ENCODE measurements at regions of chr6 and their contacts with region 1.

Region 1: GRCh38 chr6:36985808-36986703 is at the start of gene MTCH1:
- DNase-seq: peak; percentile 96
- ATAC-seq: peak; percentile 87
- H3K4me3 Mint-ChIP-seq: peak within 1 kb of the TSS; percentile 96
- H3K27ac Mint-ChIP-seq: peak within 1 kb of the TSS; percentile 91
- H3K4me1 Mint-ChIP-seq: peaks cover 20% of the 10 kb centered on the region
- H3K27me3 Mint-ChIP-seq: no peaks in the 10 kb centered on the region
- CTCF ChIP-seq: no peak
- total RNA-seq, gene MTCH1: 128 and 133 TPM in 2 replicates

Region 2: DNA sequence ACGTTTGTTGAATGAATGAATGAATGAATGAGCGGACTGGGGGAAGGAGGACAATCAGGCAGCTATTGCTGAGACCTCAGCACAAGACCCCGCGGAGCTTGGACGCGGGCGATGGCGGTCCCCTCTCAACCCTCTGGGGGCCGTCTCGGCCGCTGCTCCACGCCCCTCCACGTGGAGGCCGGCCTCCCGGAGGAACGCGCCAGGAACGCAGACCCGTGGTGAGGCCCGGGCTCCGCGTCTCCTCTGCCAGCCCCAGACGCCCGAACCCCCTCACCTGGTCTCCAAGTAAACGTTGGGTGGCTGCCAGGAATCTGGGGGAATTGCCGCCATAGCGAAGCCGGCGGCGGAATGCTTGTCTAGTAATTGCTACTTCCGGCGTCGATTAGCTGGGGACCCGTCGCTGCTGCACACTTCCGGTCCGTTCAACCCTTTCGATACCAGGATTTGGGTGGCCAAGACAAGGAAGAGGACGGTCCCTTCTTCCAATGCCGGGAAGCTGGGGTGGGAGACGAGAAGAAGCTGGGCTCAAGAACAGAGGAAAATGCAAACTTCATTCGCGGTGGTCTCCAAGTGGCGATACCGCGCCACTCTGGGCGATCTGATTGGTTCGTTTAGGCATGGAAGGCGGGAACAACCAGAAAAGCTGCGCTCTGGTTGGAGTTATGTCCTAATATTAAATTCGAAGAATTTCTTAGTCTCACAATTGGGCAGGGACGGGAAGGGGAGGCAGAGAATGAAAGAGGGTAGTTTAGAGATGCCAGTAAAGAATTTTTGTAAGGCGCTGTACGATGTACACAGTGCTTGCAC is 111.4 kb before region 1 on chr6 and contains the start of gene PPIL1:
- CTCF ChIA-PET with region 1: no interaction called
- POLR2A ChIA-PET with region 1: interaction called, 12 read pairs
- intact Hi-C with region 1: no loop called
- DNase-seq: peak; percentile 83
- ATAC-seq: peak; percentile 94
- H3K4me3 Mint-ChIP-seq: peak within 1 kb of the TSS; percentile 98
- H3K27ac Mint-ChIP-seq: peak within 1 kb of the TSS; percentile 99
- H3K4me1 Mint-ChIP-seq: peaks cover 27% of the 10 kb centered on the region
- H3K27me3 Mint-ChIP-seq: no peaks in the 10 kb centered on the region
- CTCF ChIP-seq: no peak
- total RNA-seq, gene PPIL1: 23.4 and 27.0 TPM in 2 replicates

Region 3: GRCh38 chr6:36962874-36963273 is 23.2 kb before region 1 on chr6:
- CTCF ChIA-PET with region 1: interaction called, 4 read pairs
- POLR2A ChIA-PET with region 1: interaction called, 11 read pairs
- intact Hi-C with region 1: loop called (anchors 1 kb)
- DNase-seq: peak; percentile 74
- ATAC-seq: peak; percentile 80
- H3K4me3 Mint-ChIP-seq: peak overlapping the region; percentile 67
- H3K27ac Mint-ChIP-seq: peak overlapping the region; percentile 88
- H3K4me1 Mint-ChIP-seq: peaks cover 30% of the 10 kb centered on the region
- H3K27me3 Mint-ChIP-seq: no peaks in the 10 kb centered on the region
- CTCF ChIP-seq: no peak

Region 4: DNA sequence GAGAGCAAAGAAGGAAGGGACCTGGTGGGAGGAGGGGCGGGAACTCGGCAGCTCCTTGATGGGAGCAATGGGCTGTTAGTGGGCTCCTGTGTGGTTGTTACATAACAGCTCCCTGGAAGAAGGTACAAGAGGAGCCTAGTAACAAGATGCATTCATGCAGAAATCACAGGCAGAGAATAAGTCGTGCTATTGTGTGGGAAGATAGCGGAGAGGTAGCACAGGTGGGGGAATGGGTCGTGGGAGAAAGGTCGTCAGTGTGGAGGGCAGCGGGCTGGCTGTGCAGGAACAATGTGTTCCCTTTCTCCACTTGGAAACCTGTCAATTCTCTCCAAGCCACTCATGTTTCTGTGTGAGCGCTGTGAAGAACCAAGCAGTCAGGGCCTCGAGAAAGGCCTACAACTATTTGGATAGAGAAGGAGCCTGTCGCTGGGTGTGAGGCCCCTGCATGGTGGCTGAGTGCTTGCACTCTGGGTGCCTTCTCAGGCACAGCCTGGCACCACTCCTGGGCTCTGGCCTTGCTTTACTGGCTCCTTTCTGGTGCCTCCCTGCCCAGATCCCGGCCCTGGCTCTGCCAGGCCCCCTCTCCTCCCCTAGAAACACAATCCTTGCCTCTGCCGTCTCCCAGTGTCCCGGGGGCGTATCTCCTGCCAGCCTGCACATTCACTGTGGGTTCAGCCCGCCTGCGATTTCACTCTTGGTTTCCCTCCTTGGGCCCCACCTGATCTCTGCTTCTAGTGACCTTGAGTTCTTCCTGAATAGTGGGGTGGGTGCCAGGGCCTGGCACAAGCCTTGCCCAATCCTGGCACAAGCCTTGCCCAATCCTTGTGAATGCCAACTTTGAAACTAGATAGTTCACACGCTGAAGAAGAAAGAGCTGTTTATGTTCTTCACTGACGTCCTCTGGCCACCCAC is 12.0 kb after region 1 on chr6:
- CTCF ChIA-PET with region 1: no interaction called
- POLR2A ChIA-PET with region 1: interaction called, 209 read pairs
- intact Hi-C with region 1: no loop called
- DNase-seq: no peak
- ATAC-seq: no peak
- H3K4me3 Mint-ChIP-seq: no peak overlapping the region
- H3K27ac Mint-ChIP-seq: no peak overlapping the region
- H3K4me1 Mint-ChIP-seq: peaks cover 34% of the 10 kb centered on the region
- H3K27me3 Mint-ChIP-seq: no peaks in the 10 kb centered on the region
- CTCF ChIP-seq: no peak